CD8-positive, alpha-beta T cell (primary cell): ENCODE measurements at regions of chr9 and their contacts with region 1.

Region 1: DNA sequence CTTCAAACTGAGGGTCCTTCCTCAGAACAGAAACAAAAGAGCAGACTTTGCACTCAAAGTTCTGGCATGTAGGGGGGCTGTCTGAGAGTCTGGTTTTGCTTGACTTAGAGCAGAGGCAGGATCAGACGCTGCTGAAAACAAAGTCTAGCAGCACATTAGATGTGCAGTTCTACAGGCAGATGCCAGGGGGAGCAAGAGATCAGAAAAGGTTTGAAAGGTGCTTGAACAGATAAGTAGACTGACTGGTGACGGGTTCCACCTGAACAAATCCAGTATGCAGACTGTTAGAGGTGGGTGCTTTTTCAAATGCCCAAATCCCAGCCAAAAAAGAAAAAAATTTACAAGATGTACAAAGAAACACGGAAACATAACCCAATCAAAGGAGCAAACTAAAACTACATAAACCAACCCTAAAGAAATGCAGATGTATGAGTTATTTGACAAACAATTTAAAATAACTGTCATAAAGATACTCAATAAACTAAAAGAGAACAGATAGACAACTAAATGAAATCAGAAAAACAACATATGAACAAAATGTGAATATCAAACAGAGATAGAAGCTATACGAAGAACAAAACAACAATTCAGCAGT is 194.7 kb upstream of the FREM1 start:
- DNase-seq: peak in 8 of 9 experiments; percentile 3 to 56 (median 36)
- ATAC-seq: peak; percentile 59
- H3K4me3 ChIP-seq: no peak overlapping the region
- H3K4me3 Mint-ChIP-seq: no peak overlapping the region
- H3K27ac ChIP-seq: no peak overlapping the region
- H3K27ac Mint-ChIP-seq: no peak overlapping the region
- H3K4me1 ChIP-seq: no peaks in the 10 kb centered on the region
- H3K4me1 Mint-ChIP-seq: no peaks in the 10 kb centered on the region
- H3K27me3 ChIP-seq: no peaks in the 10 kb centered on the region
- H3K27me3 Mint-ChIP-seq: peaks cover 9% of the 10 kb centered on the region
- CTCF ChIP-seq: peak; percentile 69

Region 2: GRCh38 chr9:15142878-15143534 is 38.1 kb after region 1 on chr9:
- CTCF ChIA-PET with region 1: interaction called, 7 read pairs
- POLR2A ChIA-PET with region 1: no interaction called
- intact Hi-C with region 1: loop called in 1 of 2 experiments (anchors 2 kb)
- DNase-seq: peak in 2 of 9 experiments; percentile 40 to 55
- ATAC-seq: peak; percentile 71
- H3K4me3 ChIP-seq: no peak overlapping the region
- H3K4me3 Mint-ChIP-seq: no peak overlapping the region
- H3K27ac ChIP-seq: no peak overlapping the region
- H3K27ac Mint-ChIP-seq: no peak overlapping the region
- H3K4me1 ChIP-seq: peaks cover 5% of the 10 kb centered on the region
- H3K4me1 Mint-ChIP-seq: peaks cover 4% of the 10 kb centered on the region
- H3K27me3 ChIP-seq: peaks cover 0 to 2% of the 10 kb centered on the region in 2 experiments
- H3K27me3 Mint-ChIP-seq: no peaks in the 10 kb centered on the region
- CTCF ChIP-seq: peak; percentile 79